HCT116 (cell line): ENCODE measurements at regions of chr7 and their contacts with region 1.

Region 1: GRCh38 chr7:54978364-54979118 is 40.3 kb upstream of the EGFR start:
- DNase-seq: no peak
- ATAC-seq: no peak
- H3K4me3 ChIP-seq: no peak overlapping the region
- H3K27ac ChIP-seq: no peak overlapping the region
- H3K4me1 ChIP-seq: no peaks in the 10 kb centered on the region
- H3K27me3 ChIP-seq: no peaks in the 10 kb centered on the region
- CTCF ChIP-seq: no peak
- POLR2A ChIP-seq: no peak
- RAD21 ChIP-seq: no peak

Region 2: DNA sequence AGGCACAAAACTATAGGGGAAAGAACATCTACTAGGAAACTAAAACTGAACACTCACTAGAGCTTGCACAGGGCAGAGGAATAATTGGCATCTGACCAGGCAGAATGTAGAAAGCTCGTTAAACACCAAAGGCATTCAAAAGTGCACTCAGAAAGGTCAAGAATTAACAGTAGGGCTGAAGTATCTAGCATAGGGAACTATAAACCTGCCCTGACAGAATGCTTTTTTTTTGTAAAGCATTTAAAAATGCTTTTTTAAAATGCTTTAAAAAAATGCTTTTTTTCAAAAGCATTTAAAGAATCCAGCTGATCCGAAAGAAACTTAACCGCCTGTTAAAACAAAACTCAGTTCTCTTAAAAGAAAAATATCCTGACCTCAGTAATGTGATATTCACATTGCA is 34.4 kb before region 1 on chr7:
- CTCF ChIA-PET with region 1: no interaction called
- POLR2A ChIA-PET with region 1: no interaction called
- RAD21 ChIA-PET with region 1: no interaction called
- intact Hi-C with region 1: loop called (anchors 5 kb)
- DNase-seq: no peak
- ATAC-seq: no peak
- H3K4me3 ChIP-seq: no peak overlapping the region
- H3K27ac ChIP-seq: no peak overlapping the region
- H3K4me1 ChIP-seq: peaks cover 2 to 3% of the 10 kb centered on the region in 2 experiments; a peak in 1 of 4 replicates
- H3K27me3 ChIP-seq: no peaks in the 10 kb centered on the region
- CTCF ChIP-seq: no peak
- POLR2A ChIP-seq: no peak
- RAD21 ChIP-seq: no peak

Region 3: DNA sequence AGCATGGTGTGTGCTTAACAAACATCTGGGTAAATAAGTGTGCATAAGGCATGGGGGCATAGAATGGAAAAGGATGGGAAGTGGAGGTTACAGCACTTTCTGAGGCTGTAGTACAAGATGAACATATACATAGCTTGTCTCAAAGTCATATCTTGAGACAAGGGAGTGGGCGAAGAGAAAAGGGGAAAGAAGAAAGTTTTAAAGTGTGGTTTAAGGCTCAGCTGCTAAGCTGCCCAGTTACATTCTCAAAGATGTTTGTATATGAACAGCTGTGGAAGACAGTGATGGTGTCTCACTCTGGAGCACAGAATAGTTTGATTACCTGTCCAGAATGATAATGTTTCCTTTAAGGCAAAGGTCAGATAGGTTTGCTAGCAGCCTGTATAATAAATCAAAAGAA is 324.7 kb after region 1 on chr7:
- CTCF ChIA-PET with region 1: no interaction called
- POLR2A ChIA-PET with region 1: no interaction called
- RAD21 ChIA-PET with region 1: no interaction called
- intact Hi-C with region 1: no loop called
- DNase-seq: no peak
- ATAC-seq: no peak
- H3K4me3 ChIP-seq: no peak overlapping the region
- H3K27ac ChIP-seq: no peak overlapping the region
- H3K4me1 ChIP-seq: no peaks in the 10 kb centered on the region
- H3K27me3 ChIP-seq: peaks cover 20% of the 10 kb centered on the region
- CTCF ChIP-seq: no peak
- POLR2A ChIP-seq: no peak
- RAD21 ChIP-seq: no peak